GM13977 (cell line): ENCODE measurements at regions of chr5 and their contacts with region 1.

Region 1: DNA sequence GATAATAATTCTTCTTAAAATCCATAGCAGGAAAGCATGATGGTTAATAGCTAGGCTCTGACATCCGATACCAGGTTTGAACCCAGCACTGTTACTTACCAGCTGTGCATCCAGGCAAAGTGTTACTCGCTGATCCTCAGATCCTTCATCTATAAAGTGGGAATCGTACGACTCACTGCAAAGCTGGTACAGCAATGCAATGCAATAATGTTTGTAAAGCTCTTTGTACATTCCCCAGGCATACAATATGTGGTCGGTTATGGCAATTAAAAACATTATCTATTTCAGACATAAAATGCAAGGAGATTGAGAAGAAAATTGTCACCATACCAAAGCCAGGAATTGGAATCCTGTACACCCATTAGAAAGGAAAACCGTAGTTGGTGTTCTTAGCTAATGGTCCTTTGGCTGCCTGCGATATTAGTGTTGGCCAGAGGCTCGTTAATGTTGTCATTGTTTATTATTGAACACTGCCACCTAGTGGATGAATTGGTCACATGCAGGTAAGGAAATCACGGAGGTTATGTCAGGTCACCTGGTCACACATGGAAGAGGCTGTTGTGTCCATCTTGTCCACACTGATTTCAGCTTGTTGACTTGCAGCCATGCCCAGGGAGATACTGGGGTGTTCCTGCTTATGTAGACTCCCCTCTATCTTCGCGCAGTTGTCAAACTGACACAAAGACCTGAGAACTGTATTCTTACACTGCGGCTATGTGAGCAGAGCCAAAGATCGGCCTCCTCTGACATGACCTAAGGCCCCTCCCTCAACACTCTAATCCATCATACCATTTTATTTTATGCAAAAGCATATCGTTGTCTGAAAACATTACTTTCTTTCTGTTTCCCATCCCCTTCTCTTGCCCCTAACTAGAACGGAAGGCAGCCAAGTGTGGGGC is 87.5 kb upstream of the PPP2R2B start:
- DNase-seq: peak; percentile 35
- CTCF ChIP-seq: peak; percentile 75

Region 2: GRCh38 chr5:146541958-146542849 is 423.8 kb before region 1 on chr5:
- in situ Hi-C with region 1: loop called (anchors 10 kb)
- DNase-seq: peak; percentile 59
- CTCF ChIP-seq: peak; percentile 91

Region 3: DNA sequence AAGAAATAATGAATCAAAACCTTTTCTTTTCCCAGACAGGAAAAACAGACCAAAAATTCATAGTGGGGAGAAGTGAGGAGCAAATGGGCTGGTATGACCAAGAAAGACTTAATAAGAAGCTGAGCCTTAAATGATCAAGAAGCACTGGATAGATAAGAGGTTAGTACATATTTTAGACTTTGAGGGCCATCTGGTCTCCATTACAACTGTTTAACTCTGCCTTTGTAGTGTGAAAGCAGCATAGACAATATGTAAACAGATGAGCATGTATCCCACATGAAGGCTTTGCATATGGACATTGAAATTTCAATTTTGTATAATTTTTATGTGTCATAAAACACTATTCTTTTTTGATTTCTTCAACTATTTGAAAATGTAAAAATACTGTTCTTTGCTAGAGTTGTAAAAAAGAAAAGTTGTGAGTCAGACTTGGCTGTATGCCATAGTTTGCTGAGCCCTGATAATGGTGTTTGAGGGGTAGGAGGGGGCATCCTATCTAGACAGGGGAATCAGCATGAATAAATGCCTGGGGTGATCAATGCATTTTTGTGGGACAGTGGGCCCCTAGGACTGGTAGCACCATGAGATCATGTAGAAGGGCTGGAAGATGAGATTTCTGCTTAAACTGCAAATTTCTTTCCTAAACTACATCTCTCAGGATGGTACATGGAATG is 358.2 kb before region 1 on chr5:
- in situ Hi-C with region 1: no loop called
- DNase-seq: no peak
- CTCF ChIP-seq: no peak

Region 4: GRCh38 chr5:146662229-146662628 is 303.8 kb before region 1 on chr5:
- in situ Hi-C with region 1: loop called (anchors 25 kb)
- DNase-seq: peak; percentile 10
- CTCF ChIP-seq: peak; percentile 44

Region 5: GRCh38 chr5:147055850-147056566 is 90.0 kb after region 1 on chr5:
- in situ Hi-C with region 1: no loop called
- DNase-seq: no peak
- CTCF ChIP-seq: no peak